ENCODE measurements at regions of chr11 and their contacts with region 1.

Region 1: DNA sequence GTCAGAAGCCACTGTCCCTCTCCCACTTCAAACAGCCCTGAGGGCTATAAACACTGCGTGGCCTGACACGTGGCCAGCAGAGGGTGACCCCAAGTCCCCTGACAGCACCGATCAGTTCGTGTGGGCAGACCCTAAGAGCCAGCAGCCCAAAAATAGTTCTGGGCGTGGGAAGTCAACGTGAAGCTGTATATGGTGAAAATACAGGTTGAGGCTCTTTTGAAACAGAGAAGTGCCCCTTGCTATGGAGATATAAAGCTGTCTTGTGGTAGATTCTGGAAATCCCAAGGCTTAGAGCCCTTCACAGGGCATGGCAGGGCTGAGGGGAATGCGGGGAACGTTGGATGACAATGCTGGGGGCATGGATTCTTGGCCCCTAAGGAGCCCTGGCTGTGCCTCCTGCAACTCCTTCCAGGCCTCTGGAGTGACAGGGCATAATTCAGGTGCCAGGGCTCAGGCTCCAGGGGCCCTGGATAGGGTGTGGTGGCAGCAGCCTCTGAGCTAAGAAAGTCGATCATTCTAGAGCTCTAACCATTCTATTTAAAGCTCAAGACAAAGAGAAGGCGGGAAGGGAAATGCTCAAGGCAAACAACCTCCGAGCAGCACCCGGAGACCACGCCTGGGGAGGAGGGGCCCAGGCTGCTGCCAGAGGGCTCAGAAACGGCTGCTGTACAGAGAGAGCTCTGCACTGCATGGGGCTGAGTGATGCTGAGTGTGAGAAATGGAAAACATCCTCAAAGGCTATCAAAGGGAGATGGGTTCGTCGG is 60.4 kb upstream of the CD5 start:
- DNase-seq: peak; percentile 89 to 95 (median 93)
- H3K4me3 ChIP-seq: peak overlapping the region in 1 of 2 donors; percentile 54
- H3K4me3 Mint-ChIP-seq: peak overlapping the region; percentile 83 to 94 (median 87)
- H3K27ac ChIP-seq: peak overlapping the region; percentile 85
- H3K27ac Mint-ChIP-seq: peak overlapping the region; percentile 95 to 100 (median 99)
- H3K4me1 ChIP-seq: peaks cover 61% of the 10 kb centered on the region
- H3K4me1 Mint-ChIP-seq: peaks cover 35 to 66% (median 44%) of the 10 kb centered on the region in 4 donors
- H3K27me3 ChIP-seq: no peaks in the 10 kb centered on the region
- H3K27me3 Mint-ChIP-seq: no peaks in the 10 kb centered on the region

Region 2: DNA sequence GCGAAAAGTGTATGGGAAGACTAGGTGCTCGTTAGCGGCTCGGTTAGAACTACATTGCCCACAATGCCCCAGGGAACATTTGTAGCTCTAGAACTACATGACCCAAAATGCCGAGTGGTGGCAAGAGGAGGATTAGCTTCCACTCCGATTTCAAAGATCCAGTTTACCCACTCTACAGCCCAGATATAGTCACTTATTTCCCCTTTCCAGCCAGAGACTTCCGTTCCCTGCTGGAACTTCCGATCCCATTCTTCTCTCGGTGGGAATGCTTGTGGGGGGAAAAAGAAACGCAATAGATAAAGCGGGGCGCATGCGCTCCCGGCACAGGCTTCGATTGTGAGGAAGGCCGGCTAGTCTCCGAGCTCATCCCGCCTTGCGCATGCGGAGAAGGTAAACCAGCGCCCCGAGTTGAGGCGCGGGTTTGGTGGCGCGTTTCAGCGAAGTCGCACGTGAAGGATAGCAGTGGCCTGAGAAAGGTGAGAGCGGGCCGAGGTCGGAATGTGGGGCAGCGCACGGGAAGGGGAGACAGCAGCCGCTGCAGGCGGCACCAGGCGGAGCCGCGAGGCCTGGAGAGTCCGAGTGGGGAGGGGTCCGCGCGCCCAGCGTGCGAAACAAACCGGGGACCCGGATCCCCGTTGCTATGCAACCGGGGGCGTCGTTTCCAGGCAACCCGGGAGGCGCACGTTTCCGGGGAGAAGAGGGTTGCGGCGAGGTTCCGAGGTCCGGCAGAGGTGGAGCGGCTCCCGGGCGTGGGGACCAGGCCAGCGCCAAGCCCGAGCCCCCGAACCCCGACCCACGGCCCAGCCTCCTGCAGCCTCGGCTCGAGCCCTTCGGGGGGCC is 127.9 kb before region 1 on chr11 and contains the start of gene TMEM109:
- CTCF ChIA-PET with region 1: interaction called, 4 read pairs
- POLR2A ChIA-PET with region 1: interaction called, 33 read pairs
- intact Hi-C with region 1: no loop called
- DNase-seq: peak; percentile 90 to 92 (median 91)
- H3K4me3 ChIP-seq: peak within 1 kb of the TSS; percentile 79 to 96
- H3K4me3 Mint-ChIP-seq: peak within 1 kb of the TSS; percentile 92 to 100 (median 98)
- H3K27ac ChIP-seq: peak within 1 kb of the TSS; percentile 96
- H3K27ac Mint-ChIP-seq: peak within 1 kb of the TSS; percentile 87 to 99 (median 98)
- H3K4me1 ChIP-seq: peaks cover 47% of the 10 kb centered on the region
- H3K4me1 Mint-ChIP-seq: peaks cover 31 to 65% (median 44%) of the 10 kb centered on the region in 4 donors
- H3K27me3 ChIP-seq: no peaks in the 10 kb centered on the region
- H3K27me3 Mint-ChIP-seq: no peaks in the 10 kb centered on the region
- total RNA-seq, gene TMEM109: 66.9 to 68.0 TPM

Region 3: GRCh38 chr11:60944490-60945294 is 97.2 kb before region 1 on chr11:
- CTCF ChIA-PET with region 1: no interaction called
- POLR2A ChIA-PET with region 1: no interaction called
- intact Hi-C with region 1: no loop called
- DNase-seq: no peak
- H3K4me3 ChIP-seq: no peak overlapping the region
- H3K4me3 Mint-ChIP-seq: peak overlapping the region in 1 of 8 donors; percentile 30
- H3K27ac ChIP-seq: no peak overlapping the region
- H3K27ac Mint-ChIP-seq: peak overlapping the region in 1 of 7 donors; percentile 77
- H3K4me1 ChIP-seq: no peaks in the 10 kb centered on the region
- H3K4me1 Mint-ChIP-seq: peaks cover 2 to 6% (median 3%) of the 10 kb centered on the region in 4 donors
- H3K27me3 ChIP-seq: peaks cover 3% of the 10 kb centered on the region
- H3K27me3 Mint-ChIP-seq: peaks cover 3 to 7% of the 10 kb centered on the region in 2 donors

Region 4: DNA sequence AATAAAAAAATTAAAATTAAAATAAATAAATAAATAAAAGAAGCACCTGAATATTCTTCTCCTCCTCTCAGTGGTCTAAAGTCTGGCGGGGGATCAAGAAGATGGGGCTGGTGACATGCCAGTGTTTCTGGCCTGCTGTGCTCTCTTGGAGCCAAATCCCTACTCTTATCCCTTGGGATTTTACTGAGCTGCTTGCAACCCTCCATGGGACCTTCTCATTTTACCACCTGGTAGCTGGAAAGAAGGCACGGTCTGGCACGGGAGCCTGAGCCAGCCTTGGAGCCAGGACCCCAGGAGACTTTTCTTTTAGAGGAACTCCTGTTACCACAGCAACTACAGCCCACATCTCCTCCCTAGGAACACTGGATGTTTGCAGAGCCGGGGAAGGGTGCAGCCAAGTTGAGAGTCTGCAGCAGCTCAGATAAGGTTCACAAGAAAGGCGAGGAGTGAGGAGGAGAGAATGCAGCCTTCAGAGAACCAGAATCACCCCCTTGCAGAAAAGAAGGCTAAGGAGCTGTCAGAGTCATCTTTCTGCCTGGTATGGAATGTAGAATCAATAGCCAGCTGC is 49.0 kb before region 1 on chr11:
- CTCF ChIA-PET with region 1: interaction called, 3 read pairs
- POLR2A ChIA-PET with region 1: interaction called, 95 read pairs
- intact Hi-C with region 1: no loop called
- DNase-seq: peak in 1 of 5 donors; percentile 7
- H3K4me3 ChIP-seq: no peak overlapping the region
- H3K4me3 Mint-ChIP-seq: peak overlapping the region; percentile 34 to 81 (median 78)
- H3K27ac ChIP-seq: peak overlapping the region; percentile 51
- H3K27ac Mint-ChIP-seq: peak overlapping the region; percentile 84 to 96 (median 94)
- H3K4me1 ChIP-seq: peaks cover 92% of the 10 kb centered on the region
- H3K4me1 Mint-ChIP-seq: peaks cover 53 to 86% (median 72%) of the 10 kb centered on the region in 4 donors
- H3K27me3 ChIP-seq: no peaks in the 10 kb centered on the region
- H3K27me3 Mint-ChIP-seq: no peaks in the 10 kb centered on the region

Region 5: GRCh38 chr11:61028272-61028761 is 13.6 kb before region 1 on chr11:
- CTCF ChIA-PET with region 1: interaction called, 28 read pairs
- POLR2A ChIA-PET with region 1: interaction called, 427 read pairs
- intact Hi-C with region 1: loop called (anchors 1 kb)
- DNase-seq: peak in 1 of 5 donors; percentile 83
- H3K4me3 ChIP-seq: no peak overlapping the region
- H3K4me3 Mint-ChIP-seq: peak overlapping the region; percentile 74 to 91 (median 86)
- H3K27ac ChIP-seq: peak overlapping the region; percentile 66
- H3K27ac Mint-ChIP-seq: peak overlapping the region; percentile 98 to 100 (median 98)
- H3K4me1 ChIP-seq: peaks cover 59% of the 10 kb centered on the region
- H3K4me1 Mint-ChIP-seq: peaks cover 53 to 85% (median 67%) of the 10 kb centered on the region in 4 donors
- H3K27me3 ChIP-seq: no peaks in the 10 kb centered on the region
- H3K27me3 Mint-ChIP-seq: no peaks in the 10 kb centered on the region

Region 6: DNA sequence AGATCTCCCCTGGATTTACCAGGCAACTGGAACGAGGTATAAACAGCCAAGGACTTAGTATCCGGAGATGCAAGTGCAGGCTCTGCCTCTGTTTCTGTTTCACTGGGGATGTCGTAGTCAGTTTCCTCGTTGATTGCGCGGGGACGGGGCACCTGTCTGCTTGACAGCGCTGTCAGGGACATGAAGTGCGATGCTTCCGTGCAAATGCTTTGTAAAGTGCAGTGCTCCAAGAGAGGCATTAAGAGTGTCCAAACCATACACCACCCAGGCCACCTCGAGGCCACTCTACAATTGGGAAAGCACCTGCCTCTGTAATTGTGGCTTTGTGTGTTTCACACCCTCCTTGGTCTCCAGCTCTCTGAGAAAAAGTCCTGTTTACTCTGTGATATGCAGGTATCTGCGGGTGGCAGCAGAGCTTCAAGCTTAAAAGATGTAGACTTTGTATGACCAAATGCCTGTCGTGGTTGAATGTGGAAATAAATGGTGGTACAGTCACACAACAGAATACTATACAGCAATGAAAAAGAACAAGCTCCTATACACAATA is 41.7 kb after region 1 on chr11:
- CTCF ChIA-PET with region 1: interaction called, 54 read pairs
- POLR2A ChIA-PET with region 1: interaction called, 1,022 read pairs
- intact Hi-C with region 1: loop called (anchors 2 kb)
- DNase-seq: peak; percentile 80 to 91 (median 82)
- H3K4me3 ChIP-seq: peak overlapping the region in 1 of 2 donors; percentile 19
- H3K4me3 Mint-ChIP-seq: peak overlapping the region; percentile 75 to 90 (median 86)
- H3K27ac ChIP-seq: peak overlapping the region; percentile 91
- H3K27ac Mint-ChIP-seq: peak overlapping the region; percentile 94 to 100 (median 99)
- H3K4me1 ChIP-seq: peaks cover 55% of the 10 kb centered on the region
- H3K4me1 Mint-ChIP-seq: peaks cover 42 to 65% (median 50%) of the 10 kb centered on the region in 4 donors
- H3K27me3 ChIP-seq: no peaks in the 10 kb centered on the region
- H3K27me3 Mint-ChIP-seq: no peaks in the 10 kb centered on the region

Region 7: DNA sequence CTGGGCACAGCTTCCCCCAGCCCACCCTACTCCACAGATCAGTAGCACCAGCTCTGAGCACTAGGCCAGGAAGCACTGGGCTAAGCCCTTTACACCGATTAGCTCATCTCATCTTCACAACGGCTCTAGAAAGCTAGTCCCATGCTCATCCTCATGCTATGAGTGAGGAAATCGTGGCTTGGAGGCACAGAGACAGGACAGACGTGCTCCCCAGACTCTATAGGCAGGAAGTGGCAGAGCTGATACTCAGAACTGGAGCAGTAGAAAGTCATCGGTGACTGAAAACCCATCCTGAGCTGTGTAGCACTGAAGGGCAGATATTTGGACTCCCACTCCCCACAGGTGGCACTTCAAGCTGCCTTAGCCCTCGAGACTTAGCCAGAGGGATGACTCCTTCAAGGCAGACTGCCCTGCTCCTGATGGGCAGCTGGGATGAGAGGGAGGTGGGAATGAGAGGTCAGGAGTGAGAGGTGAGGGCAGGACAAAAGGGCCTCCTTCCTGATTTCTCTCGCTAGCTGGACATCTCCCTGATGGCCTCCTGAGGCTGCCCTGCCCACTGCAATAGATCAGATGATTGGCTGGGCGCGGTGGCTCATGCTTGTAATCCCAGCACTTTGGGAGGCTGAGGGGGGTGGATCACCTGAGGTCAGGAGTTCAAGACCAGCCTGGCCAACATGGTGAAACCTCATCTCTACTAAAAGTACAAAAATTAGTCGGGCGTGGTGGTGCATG is 70.0 kb after region 1 on chr11:
- CTCF ChIA-PET with region 1: interaction called, 19 read pairs
- POLR2A ChIA-PET with region 1: interaction called, 88 read pairs
- intact Hi-C with region 1: no loop called
- DNase-seq: peak; percentile 64 to 87 (median 72)
- H3K4me3 ChIP-seq: peak overlapping the region in 1 of 2 donors; percentile 20
- H3K4me3 Mint-ChIP-seq: peak overlapping the region in 5 of 8 donors; percentile 37 to 83 (median 75)
- H3K27ac ChIP-seq: peak overlapping the region; percentile 100
- H3K27ac Mint-ChIP-seq: peak overlapping the region in 5 of 7 donors; percentile 78 to 98 (median 89)
- H3K4me1 ChIP-seq: peaks cover 100% of the 10 kb centered on the region
- H3K4me1 Mint-ChIP-seq: peaks cover 0 to 100% (median 82%) of the 10 kb centered on the region in 4 donors
- H3K27me3 ChIP-seq: no peaks in the 10 kb centered on the region
- H3K27me3 Mint-ChIP-seq: no peaks in the 10 kb centered on the region

Measured in CD4-positive, alpha-beta memory T cell (primary cell).